Activated naive CD4-positive, alpha-beta T cell treated with anti-CD3 and anti-CD28 coated beads for 36 hours (primary cell): ENCODE measurements at regions of chr19 and their contacts with region 1.

Region 1: DNA sequence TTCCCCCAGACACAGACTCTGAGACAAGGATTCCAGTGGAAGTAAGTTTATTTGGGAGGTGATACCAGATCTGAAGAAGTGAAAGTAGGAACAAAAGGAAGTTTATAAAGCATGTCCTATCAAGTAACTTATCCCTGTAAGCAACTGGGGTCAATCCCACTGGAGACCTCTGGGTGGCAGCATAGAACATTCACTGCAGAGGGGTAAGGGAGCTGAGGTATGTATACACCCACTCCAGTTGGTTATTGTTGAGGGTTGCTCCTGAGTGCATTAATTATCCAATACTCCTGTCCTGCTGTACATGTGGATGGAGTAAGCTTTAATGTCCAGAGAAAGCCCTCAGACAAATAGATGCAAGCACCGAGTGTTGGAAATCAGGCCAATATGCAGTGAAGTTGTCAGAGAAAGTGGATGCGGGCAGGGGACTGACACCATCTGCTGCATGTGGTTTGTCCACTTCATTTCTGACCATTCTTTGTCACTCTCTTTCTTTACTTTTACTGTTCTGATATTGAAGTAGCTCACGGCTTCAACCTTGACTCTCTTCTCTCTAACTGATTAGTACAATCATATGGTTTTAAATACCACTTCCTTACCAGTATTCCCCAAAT is 46.7 kb downstream of the NOTCH3 start:
- DNase-seq: peak; percentile 68
- H3K4me3 Mint-ChIP-seq: no peak overlapping the region
- H3K27ac Mint-ChIP-seq: no peak overlapping the region
- H3K4me1 Mint-ChIP-seq: peaks cover 5% of the 10 kb centered on the region
- H3K27me3 Mint-ChIP-seq: no peaks in the 10 kb centered on the region

Region 2: GRCh38 chr19:14871619-14872230 is 282.4 kb before region 1 on chr19:
- CTCF ChIA-PET with region 1: no interaction called
- intact Hi-C with region 1: loop called (anchors 1 kb)
- DNase-seq: no peak
- H3K4me3 Mint-ChIP-seq: no peak overlapping the region
- H3K27ac Mint-ChIP-seq: no peak overlapping the region
- H3K4me1 Mint-ChIP-seq: no peaks in the 10 kb centered on the region
- H3K27me3 Mint-ChIP-seq: peaks cover 30% of the 10 kb centered on the region

Region 3: DNA sequence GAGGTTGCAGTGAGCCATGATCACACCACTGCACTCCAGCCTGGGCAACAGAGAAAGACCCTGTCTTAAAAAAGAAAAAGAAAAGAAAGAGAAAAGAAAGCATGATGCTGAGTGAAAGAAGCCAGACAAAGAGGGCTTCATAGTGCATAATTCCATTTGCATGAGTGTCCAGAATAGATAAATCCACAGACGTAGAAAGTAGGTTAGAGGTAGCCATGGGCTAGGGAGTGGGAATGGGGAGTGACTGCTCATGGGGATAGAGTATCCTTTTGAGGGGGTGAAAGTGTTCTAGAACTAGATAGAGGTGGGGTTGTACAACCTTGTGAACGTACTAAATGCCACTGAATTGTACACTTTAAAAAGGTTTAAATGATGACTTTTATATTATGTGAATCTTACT is 79.7 kb before region 1 on chr19:
- CTCF ChIA-PET with region 1: no interaction called
- intact Hi-C with region 1: no loop called
- DNase-seq: no peak
- H3K4me3 Mint-ChIP-seq: no peak overlapping the region
- H3K27ac Mint-ChIP-seq: no peak overlapping the region
- H3K4me1 Mint-ChIP-seq: no peaks in the 10 kb centered on the region
- H3K27me3 Mint-ChIP-seq: peaks cover 10% of the 10 kb centered on the region

Region 4: GRCh38 chr19:15091901-15092753 is 62.0 kb before region 1 on chr19:
- CTCF ChIA-PET with region 1: interaction called, 23 read pairs
- intact Hi-C with region 1: loop called (anchors 1 kb)
- DNase-seq: peak; percentile 61
- H3K4me3 Mint-ChIP-seq: no peak overlapping the region
- H3K27ac Mint-ChIP-seq: no peak overlapping the region
- H3K4me1 Mint-ChIP-seq: peaks cover 2% of the 10 kb centered on the region
- H3K27me3 Mint-ChIP-seq: peaks cover 8% of the 10 kb centered on the region

Region 5: DNA sequence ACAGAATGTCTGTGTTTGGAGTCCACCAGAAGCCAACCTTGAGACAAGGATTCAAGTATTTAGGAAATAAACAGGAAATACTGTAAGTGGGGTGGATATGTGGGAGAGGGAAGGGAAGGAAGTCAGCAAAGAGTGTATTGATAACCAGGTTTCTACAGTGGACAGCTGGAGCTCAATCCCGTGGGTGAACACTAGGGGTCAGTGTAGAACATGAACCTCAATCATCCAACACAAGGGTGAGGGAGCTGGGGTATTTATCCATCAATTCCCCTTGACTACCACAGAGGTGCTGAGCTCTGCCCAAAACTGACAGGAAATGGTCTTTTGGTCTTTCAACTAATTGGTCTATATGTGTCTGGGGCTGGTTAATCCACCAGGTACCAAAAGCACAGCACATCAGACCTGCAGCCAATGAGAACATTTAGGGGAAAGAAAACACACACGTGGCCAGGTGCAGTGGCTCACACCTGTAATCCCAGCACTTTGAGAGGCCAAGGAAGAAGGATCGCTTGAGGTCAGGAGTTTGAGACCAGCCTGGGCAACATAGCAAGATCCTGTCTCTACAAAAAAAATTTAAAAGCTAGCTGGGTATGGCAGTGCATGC is 52.5 kb before region 1 on chr19:
- CTCF ChIA-PET with region 1: interaction called, 51 read pairs
- intact Hi-C with region 1: loop called (anchors 1 kb)
- DNase-seq: peak; percentile 81
- H3K4me3 Mint-ChIP-seq: no peak overlapping the region
- H3K27ac Mint-ChIP-seq: no peak overlapping the region
- H3K4me1 Mint-ChIP-seq: peaks cover 1% of the 10 kb centered on the region
- H3K27me3 Mint-ChIP-seq: peaks cover 1% of the 10 kb centered on the region